Endothelial cell of umbilical vein (primary cell): ENCODE measurements at regions of chr1 and their contacts with region 1.

Region 1: DNA sequence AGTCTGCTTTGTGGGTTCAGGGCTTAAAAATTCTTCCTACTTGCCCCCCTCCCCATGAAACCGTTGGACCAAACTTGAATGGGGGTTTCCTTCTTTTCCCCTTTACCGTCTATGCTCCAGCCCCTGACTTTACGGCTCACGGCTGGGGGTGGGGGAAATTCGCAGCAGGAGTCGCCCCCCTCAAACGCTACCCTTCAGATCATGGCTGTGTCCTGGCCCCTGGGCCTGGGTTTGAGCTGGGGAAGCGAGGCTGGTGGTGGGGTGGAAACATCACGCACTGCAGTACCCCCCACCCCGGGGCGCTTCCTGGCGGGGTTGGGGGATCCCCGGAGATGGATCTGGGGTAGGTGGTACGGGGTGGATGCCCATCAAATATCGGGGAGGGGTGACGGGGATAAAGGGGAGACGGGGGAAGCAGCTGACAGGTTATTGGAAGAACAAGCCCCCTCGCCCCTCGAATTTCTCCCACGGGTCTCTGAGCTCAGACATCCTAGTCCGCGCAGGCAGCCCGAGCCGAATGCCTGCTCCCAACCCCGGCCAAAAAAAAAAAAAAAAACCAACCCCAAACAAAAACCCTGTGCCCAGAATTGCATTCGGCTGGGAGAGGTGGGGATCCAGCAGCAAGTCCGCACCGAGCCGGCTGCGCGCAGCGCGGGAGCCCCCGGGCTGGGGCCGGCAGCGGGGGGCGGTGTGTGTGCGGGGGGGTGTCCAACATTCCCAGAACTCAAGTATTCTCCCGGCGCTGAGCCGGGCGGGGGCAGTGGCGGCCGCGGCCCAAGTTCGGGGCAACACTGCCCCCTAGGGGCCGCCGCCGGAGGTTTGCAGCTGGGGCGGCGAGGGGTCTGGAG is 59.0 kb upstream of the ACOT11 start:
- DNase-seq: peak; percentile 80
- H3K4me3 ChIP-seq: peak overlapping the region; percentile 41 to 85 (median 66)
- H3K27ac ChIP-seq: peak overlapping the region; percentile 87
- H3K4me1 ChIP-seq: peaks cover 17% of the 10 kb centered on the region
- H3K27me3 ChIP-seq: no peaks in the 10 kb centered on the region
- CTCF ChIP-seq: peak; percentile 88 to 91
- POLR2A ChIP-seq: no peak

Region 2: DNA sequence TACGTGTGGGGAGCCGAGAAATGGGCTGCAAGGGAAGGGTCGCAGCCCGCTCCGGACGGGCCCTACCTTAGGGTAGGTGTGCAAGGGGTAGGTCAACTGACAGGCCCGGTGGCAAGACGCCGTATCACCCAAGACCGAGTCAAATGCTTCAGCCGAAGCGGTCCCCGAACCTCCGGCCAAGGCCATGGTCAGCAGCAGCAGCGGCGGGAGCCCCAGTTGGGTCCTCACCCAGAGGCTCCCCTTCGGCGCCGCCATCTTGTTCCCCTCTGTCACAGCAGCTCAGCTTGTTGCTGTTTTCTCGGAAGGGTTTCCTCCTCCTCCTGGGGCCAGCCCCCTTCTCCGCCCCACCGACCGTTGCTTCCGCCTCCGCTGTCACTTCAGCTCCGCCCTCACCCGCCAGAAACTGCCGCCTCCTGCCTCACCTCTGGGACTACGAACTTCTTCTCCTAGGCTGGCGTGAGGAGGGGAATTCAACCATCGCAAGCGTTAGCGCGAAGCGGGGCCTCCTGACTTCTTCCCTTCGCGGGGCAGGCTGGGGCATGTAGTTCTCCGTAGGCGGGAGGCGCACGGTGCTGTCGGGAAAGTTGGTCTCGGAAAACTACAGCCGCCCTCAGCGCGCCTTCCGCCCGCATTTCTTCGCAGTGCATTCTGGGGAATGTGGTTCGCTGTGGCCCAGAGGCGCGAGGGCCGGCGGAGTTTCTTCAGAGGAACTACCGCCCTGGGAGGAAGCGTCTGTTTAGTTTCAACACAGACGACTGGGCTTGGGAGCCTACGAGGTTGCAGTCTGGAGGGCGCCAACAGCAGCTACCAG is 435.9 kb before region 1 on chr1 and contains the starts of genes TCEANC2 and TMEM59:
- CTCF ChIA-PET with region 1: interaction called, 6 read pairs
- POLR2A ChIA-PET with region 1: no interaction called
- dilution Hi-C with region 1: no loop called
- intact Hi-C with region 1: loop called (anchors 5 kb)
- DNase-seq: peak; percentile 99
- H3K4me3 ChIP-seq: peak within 1 kb of the TSS; percentile 81 to 96 (median 91)
- H3K27ac ChIP-seq: peak within 1 kb of the TSS; percentile 64
- H3K4me1 ChIP-seq: peaks cover 11% of the 10 kb centered on the region
- H3K27me3 ChIP-seq: no peaks in the 10 kb centered on the region
- CTCF ChIP-seq: no peak
- POLR2A ChIP-seq: peak; percentile 42
- total RNA-seq, gene TCEANC2: 5.1 and 6.1 TPM in 2 replicates
- total RNA-seq, gene TMEM59: 196 and 198 TPM in 2 replicates

Region 3: GRCh38 chr1:54180701-54181360 is 308.2 kb before region 1 on chr1:
- CTCF ChIA-PET with region 1: interaction called, 17 read pairs
- POLR2A ChIA-PET with region 1: no interaction called
- dilution Hi-C with region 1: no loop called
- intact Hi-C with region 1: loop called (anchors 1 kb)
- DNase-seq: no peak
- H3K4me3 ChIP-seq: no peak overlapping the region
- H3K27ac ChIP-seq: no peak overlapping the region
- H3K4me1 ChIP-seq: peaks cover 5% of the 10 kb centered on the region
- H3K27me3 ChIP-seq: no peaks in the 10 kb centered on the region
- CTCF ChIP-seq: no peak
- POLR2A ChIP-seq: no peak

Region 4: GRCh38 chr1:54310439-54311328 is 178.3 kb before region 1 on chr1:
- CTCF ChIA-PET with region 1: interaction called, 41 read pairs
- POLR2A ChIA-PET with region 1: interaction called, 10 read pairs
- dilution Hi-C with region 1: no loop called
- intact Hi-C with region 1: loop called (anchors 1 kb)
- DNase-seq: peak; percentile 68
- H3K4me3 ChIP-seq: no peak overlapping the region
- H3K27ac ChIP-seq: no peak overlapping the region
- H3K4me1 ChIP-seq: peaks cover 12% of the 10 kb centered on the region
- H3K27me3 ChIP-seq: no peaks in the 10 kb centered on the region
- CTCF ChIP-seq: peak; percentile 73 to 79
- POLR2A ChIP-seq: no peak

Region 5: GRCh38 chr1:54413295-54413694 is 75.7 kb before region 1 on chr1:
- CTCF ChIA-PET with region 1: interaction called, 14 read pairs
- POLR2A ChIA-PET with region 1: interaction called, 5 read pairs
- dilution Hi-C with region 1: no loop called
- intact Hi-C with region 1: no loop called
- DNase-seq: peak; percentile 72
- H3K4me3 ChIP-seq: no peak overlapping the region
- H3K27ac ChIP-seq: peak overlapping the region; percentile 58
- H3K4me1 ChIP-seq: peaks cover 19% of the 10 kb centered on the region
- H3K27me3 ChIP-seq: peaks cover 0 to 2% of the 10 kb centered on the region in 2 experiments
- CTCF ChIP-seq: no peak
- POLR2A ChIP-seq: peak; percentile 67

Region 6: GRCh38 chr1:54810100-54810942 is 321.3 kb after region 1 on chr1:
- CTCF ChIA-PET with region 1: interaction called, 8 read pairs
- POLR2A ChIA-PET with region 1: no interaction called
- dilution Hi-C with region 1: no loop called
- intact Hi-C with region 1: loop called (anchors 2 kb)
- DNase-seq: peak; percentile 54
- H3K4me3 ChIP-seq: no peak overlapping the region
- H3K27ac ChIP-seq: no peak overlapping the region
- H3K4me1 ChIP-seq: no peaks in the 10 kb centered on the region
- H3K27me3 ChIP-seq: no peaks in the 10 kb centered on the region
- CTCF ChIP-seq: peak; percentile 76 to 89
- POLR2A ChIP-seq: no peak